ENCODE measurements at regions of chr11 and their contacts with region 1.

Region 1: DNA sequence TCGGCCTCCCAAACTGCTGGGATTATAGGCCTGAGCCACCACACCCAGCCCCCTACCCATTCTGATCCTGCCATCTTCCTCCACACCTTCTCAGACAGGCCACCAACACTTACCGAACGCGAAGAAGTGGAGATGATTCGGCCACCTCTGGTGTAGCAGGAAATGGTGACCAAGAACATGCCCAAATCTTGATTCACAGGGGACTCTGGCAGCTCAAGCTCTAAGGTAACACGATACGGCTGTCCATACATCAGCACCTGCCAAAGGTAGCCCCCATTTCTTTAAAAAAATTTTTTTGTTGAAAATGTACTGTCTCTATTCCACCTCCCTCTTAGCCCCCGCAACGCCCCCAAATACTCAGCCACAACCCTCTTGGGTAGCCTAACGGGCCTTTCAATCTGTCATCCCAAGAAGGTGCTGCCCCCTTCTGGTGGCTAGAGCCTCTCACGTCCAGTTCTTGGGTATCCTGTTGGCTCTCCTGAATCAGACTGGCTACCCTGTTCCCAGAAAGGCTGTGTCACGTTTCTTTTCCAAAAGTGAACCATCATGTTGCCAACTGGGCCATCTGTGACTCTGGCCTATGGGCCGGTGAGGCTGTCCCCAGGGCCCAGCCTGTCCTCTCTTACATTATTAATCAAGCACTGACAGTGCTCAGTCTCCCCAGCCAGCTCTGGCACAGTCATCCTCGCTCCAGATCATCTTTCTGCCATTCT is 5.3 kb upstream of the LRRN4CL start:
- DNase-seq: no peak
- H3K4me3 ChIP-seq: no peak overlapping the region
- CTCF ChIP-seq: peak; percentile 84

Region 2: DNA sequence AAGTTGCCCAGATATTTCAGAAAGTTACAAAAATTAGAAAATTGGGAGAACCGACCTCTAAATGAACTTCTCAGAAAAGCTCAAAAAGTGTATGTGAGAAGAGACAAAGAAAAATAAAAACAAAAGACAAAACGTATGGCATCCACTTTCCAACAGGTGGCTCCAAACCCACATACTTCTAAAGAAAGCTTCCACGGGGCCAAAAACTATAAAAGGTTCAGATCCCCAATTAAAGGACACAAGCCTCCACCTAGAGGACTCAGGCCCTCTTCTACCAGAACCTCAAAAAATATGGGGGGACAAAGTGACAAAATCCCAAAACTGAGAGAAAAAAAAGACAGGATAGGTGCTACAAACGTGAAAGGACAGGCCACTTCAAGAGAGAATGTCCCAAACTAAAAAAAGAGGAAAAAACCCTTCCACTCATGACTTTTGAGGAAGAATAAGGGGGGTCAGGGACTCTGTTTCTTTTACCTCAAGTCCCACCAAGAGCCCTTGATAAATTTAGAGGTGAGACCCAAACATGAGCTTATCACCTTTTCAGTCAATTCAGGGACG is 477.3 kb before region 1 on chr11:
- CTCF ChIA-PET with region 1: no interaction called
- POLR2A ChIA-PET with region 1: no interaction called
- DNase-seq: no peak
- H3K4me3 ChIP-seq: no peak overlapping the region
- CTCF ChIP-seq: peak; percentile 0

Region 3: DNA sequence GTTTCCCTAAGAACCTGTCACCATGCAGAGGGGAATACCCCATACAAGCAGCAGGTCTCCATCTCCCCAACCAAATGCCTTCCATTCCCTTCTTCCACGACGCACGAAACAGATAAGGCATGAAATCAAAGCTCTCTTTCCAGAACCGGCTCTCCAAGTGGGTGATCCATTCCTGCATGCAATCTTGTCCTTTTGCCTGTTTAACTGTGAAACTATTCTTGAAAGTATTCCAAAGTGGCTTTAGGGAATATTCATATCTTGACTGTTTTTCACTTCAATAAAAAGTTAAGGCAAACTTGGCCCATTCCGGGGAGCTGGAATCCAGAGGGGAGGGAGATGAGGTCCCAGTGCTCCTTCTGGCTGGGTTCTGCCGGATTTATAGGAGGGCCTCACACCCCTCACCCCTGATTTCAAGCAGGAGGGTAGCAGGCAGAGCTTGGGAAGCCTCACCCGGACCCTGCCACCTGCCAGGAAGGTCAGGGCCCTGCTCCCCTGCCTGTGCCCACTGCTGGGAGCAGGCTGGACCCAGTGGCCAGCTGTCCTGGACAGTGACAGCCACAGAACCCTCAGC is 214.9 kb before region 1 on chr11:
- CTCF ChIA-PET with region 1: no interaction called
- POLR2A ChIA-PET with region 1: no interaction called
- DNase-seq: no peak
- H3K4me3 ChIP-seq: no peak overlapping the region
- CTCF ChIP-seq: no peak

Region 4: DNA sequence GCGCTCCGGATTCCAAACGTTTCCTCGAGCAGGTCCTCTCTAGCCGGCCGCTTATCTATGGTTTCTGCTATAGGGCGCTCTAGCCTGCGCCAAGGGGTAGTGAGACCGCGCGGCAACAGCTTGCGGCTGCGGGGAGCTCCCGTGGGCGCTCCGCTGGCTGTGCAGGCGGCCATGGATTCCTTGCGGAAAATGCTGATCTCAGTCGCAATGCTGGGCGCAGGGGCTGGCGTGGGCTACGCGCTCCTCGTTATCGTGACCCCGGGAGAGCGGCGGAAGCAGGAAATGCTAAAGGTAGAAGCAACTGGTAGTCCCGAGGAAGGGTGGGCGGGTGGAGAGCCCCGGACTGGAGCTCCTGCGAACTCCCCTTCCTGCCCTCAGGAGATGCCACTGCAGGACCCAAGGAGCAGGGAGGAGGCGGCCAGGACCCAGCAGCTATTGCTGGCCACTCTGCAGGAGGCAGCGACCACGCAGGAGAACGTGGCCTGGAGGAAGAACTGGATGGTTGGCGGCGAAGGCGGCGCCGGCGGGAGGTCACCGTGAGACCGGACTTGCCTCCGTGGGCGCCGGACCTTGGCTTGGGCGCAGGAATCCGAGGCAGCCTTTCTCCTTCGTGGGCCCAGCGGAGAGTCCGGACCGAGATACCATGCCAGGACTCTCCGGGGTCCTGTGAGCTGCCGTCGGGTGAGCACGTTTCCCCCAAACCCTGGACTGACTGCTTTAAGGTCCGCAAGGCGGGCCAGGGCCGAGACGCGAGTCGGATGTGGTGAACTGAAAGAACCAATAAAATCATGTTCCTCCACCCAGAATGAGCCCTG is 22.8 kb before region 1 on chr11 and contains the starts of genes LBHD1 and UQCC3:
- CTCF ChIA-PET with region 1: interaction called, 31 read pairs
- POLR2A ChIA-PET with region 1: interaction called, 9 read pairs
- DNase-seq: no peak
- H3K4me3 ChIP-seq: peak within 1 kb of the TSS; percentile 76
- CTCF ChIP-seq: no peak

Region 5: GRCh38 chr11:62678770-62679696 is 15.6 kb before region 1 on chr11 and contains the start of gene UBXN1:
- CTCF ChIA-PET with region 1: interaction called, 128 read pairs
- POLR2A ChIA-PET with region 1: interaction called, 10 read pairs
- DNase-seq: no peak
- H3K4me3 ChIP-seq: peak within 1 kb of the TSS; percentile 95
- CTCF ChIP-seq: no peak

Region 6: GRCh38 chr11:62705880-62706849 is 11.6 kb after region 1 on chr11:
- CTCF ChIA-PET with region 1: interaction called, 152 read pairs
- POLR2A ChIA-PET with region 1: interaction called, 14 read pairs
- DNase-seq: no peak
- H3K4me3 ChIP-seq: peak overlapping the region; percentile 77
- CTCF ChIP-seq: no peak